Breast epithelium (tissue), 4 donors: ENCODE measurements at regions of chr2 and their contacts with region 1.

Region 1: DNA sequence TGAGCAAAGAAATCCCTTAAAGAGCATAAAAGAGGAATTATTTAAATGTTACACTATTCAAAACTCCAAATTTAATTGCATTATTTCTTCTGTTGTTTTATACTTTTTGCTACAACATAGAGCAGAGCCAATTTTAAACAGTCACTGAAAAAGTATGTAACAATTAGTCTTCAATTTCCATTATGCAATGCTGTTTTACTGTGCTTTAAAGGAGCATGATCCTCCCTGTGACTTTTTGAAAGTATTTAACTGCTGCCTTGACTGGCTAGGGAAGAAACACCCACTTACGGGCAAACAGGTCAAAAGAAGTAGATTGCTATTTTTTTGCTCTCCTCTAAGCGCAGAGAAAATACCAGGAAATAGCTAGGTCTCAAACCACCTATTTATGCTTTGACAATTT is 217.4 kb upstream of the GCFC2 start:
- DNase-seq: no peak
- H3K4me3 ChIP-seq: no peak overlapping the region
- H3K27ac ChIP-seq: no peak overlapping the region
- H3K4me1 ChIP-seq: no peaks in the 10 kb centered on the region
- H3K27me3 ChIP-seq: no peaks in the 10 kb centered on the region
- CTCF ChIP-seq: no peak
- POLR2A ChIP-seq: no peak

Region 2: GRCh38 chr2:77001895-77002294 is 1073.8 kb after region 1 on chr2:
- intact Hi-C with region 1: loop called (anchors 5 kb)
- DNase-seq: no peak
- H3K4me3 ChIP-seq: no peak overlapping the region
- H3K27ac ChIP-seq: no peak overlapping the region
- H3K4me1 ChIP-seq: no peaks in the 10 kb centered on the region
- H3K27me3 ChIP-seq: no peaks in the 10 kb centered on the region
- CTCF ChIP-seq: no peak
- POLR2A ChIP-seq: no peak